ENCODE measurements at regions of chr3 and their contacts with region 1.

Region 1: DNA sequence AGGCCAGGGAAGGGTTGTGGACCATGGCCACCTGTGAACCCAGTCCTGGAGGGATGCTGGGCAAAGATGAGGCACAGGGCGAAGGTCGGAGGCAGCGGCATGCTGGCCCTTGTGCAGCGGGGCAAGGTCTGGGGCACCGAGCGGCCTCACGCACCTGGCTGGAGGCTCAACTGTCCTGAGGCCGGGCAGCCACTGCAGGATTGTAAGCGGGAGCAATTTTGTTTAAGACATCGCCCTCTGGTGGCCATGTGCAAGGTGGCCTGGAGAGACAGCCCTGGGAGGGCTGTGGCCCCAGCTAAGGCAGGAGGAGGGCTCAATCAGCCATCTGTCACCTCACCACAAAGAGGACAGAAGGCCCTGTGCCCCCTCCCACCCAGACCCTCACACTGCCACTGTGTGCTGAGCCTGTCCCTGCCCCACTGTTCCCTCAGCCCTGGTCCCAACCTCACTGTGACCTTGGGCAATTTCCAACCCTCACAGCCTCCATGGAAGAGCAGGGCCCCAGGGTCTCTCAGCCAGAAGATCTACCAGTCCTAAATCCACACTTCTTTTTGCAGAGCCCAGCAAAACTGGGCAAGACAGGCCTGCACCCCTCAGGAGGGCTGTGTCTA is 46.2 kb downstream of the TPRA1 start:
- DNase-seq: peak; percentile 89
- H3K4me3 Mint-ChIP-seq: no peak overlapping the region
- H3K27ac Mint-ChIP-seq: no peak overlapping the region
- H3K4me1 Mint-ChIP-seq: peaks cover 11% of the 10 kb centered on the region
- H3K27me3 Mint-ChIP-seq: peaks cover 12% of the 10 kb centered on the region

Region 2: GRCh38 chr3:126522363-126522788 is 1021.9 kb before region 1 on chr3:
- intact Hi-C with region 1: loop called (anchors 1 kb)
- DNase-seq: peak; percentile 82
- H3K4me3 Mint-ChIP-seq: no peak overlapping the region
- H3K27ac Mint-ChIP-seq: no peak overlapping the region
- H3K4me1 Mint-ChIP-seq: no peaks in the 10 kb centered on the region
- H3K27me3 Mint-ChIP-seq: peaks cover 15% of the 10 kb centered on the region

Region 3: GRCh38 chr3:126679318-126679751 is 865.0 kb before region 1 on chr3:
- intact Hi-C with region 1: loop called (anchors 1 kb)
- DNase-seq: peak; percentile 93
- H3K4me3 Mint-ChIP-seq: no peak overlapping the region
- H3K27ac Mint-ChIP-seq: no peak overlapping the region
- H3K4me1 Mint-ChIP-seq: peaks cover 3% of the 10 kb centered on the region
- H3K27me3 Mint-ChIP-seq: peaks cover 19% of the 10 kb centered on the region

Region 4: GRCh38 chr3:126752303-126752842 is 791.9 kb before region 1 on chr3:
- intact Hi-C with region 1: loop called (anchors 5 kb)
- DNase-seq: peak; percentile 88
- H3K4me3 Mint-ChIP-seq: no peak overlapping the region
- H3K27ac Mint-ChIP-seq: no peak overlapping the region
- H3K4me1 Mint-ChIP-seq: peaks cover 6% of the 10 kb centered on the region
- H3K27me3 Mint-ChIP-seq: no peaks in the 10 kb centered on the region

Region 5: DNA sequence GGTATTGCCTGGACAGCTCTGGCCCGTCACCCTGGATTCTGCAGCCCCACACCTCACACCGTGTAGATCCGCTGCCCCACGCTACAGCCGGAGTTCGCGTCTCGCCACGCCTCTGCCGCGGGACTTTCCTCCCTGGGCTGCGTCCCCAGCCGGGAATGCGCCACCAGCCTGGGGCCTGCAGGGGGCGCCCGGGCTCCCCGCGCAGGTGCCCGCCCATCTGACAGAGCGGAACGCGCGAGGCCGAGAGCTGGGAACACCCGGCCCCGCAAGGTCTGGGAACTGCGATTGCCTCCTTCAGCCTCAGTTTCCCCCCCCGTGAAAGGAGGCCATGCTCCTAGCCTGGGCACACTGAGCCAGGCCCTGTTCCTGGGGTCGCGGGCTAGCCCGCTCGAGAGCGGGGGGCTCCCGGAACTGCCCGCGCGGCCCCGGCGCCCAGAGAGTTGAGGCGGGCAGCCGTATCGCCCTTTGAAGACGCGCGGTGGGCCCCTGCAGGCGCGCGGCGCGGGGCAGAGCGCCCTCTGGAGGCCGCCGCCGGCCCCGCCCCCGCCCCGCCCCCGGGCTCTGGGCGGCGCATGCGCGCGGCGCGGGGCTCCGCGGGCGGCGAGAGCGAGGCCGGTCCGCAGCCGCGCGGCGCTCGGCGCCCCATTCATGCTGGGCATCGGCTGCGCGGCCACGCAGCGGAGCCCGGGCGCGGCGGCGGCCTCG is 561.7 kb before region 1 on chr3 and contains the start of gene PLXNA1:
- intact Hi-C with region 1: loop called (anchors 1 kb)
- DNase-seq: peak; percentile 97
- H3K4me3 Mint-ChIP-seq: peak within 1 kb of the TSS; percentile 89
- H3K27ac Mint-ChIP-seq: peak within 1 kb of the TSS; percentile 92
- H3K4me1 Mint-ChIP-seq: peaks cover 22% of the 10 kb centered on the region
- H3K27me3 Mint-ChIP-seq: peaks cover 9% of the 10 kb centered on the region
- total RNA-seq, gene PLXNA1: 21.3 and 24.0 TPM in 2 replicates

Region 6: DNA sequence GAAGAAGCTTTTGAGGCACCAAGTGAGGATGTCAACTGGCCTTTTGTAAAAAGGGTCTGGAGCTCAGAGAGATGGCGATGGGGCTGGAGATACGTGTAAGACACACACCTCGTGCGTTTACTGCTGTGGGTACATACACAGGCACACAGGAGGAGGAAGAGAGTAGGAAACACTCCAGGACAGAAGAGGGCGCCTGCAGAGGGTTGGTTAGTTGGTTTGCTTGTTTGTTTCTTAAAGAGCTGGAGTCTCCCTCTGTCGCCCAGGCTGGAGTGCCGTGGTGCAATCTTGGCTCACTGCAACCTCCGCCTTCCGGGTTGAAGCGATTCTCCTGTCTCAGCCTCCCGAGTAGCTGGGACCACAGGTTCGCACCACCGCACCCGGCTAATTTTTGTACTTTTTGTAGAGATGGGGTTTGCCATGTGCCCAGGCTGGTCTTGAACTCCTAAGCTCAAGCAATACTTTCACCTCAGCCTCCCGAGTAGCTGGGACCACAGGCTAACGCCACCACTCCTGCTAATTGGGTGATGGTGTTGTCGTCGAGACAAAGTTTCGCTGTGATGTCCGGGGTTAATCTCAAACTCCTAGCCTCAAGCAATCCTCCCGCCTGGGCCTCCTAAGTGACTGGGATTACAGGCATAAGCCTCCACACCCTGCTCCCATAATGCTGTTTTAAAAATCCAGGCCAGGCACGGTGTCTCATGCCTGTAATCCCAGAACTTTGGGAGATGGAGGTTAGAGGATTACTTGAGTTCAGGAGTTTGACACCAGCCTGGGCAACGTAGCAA is 255.2 kb before region 1 on chr3:
- intact Hi-C with region 1: loop called (anchors 10 kb)
- DNase-seq: peak; percentile 76
- H3K4me3 Mint-ChIP-seq: no peak overlapping the region
- H3K27ac Mint-ChIP-seq: no peak overlapping the region
- H3K4me1 Mint-ChIP-seq: no peaks in the 10 kb centered on the region
- H3K27me3 Mint-ChIP-seq: no peaks in the 10 kb centered on the region